ENCODE measurements at regions of chr1 and their contacts with region 1.

Region 1: GRCh38 chr1:201538612-201539551 is at the start of gene NAV1:
- DNase-seq: peak; percentile 72
- ATAC-seq: peak; percentile 51
- total RNA-seq, gene NAV1: 69.0 TPM

Region 2: DNA sequence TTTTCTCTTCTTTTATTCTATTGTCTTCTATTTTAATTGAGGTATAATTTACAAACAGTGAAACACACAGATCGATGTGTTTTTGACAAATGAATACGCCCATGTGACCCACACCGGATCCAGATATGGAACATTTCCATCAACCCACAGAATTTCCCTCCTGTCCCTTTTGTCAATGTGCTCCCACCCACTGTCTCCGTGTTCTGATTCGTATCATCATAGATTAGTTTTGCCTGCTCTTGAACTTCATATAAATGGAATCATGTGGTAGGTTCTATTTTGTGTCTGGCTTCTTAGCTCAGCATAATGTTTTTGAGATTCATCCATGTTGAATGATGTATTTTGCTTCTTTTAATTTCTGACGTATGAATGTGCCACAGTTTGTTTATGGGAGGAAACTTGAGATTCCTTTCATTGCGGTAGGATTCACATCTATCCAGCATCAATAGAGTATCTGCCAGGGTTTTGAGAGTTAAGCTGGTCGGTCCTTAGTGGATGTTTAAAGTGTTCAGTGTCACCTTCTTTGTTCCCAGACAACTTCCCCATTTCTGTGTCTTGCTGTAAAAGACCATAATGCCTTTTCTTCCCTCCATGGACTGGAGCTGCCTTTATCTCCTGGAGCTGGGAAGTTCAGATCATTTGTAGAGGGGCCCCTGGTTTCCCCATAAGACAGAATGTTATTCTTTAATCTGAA is 14.8 kb after region 1 on chr1:
- intact Hi-C with region 1: loop called (anchors 2 kb)
- DNase-seq: no peak
- ATAC-seq: no peak

Measured in Right ventricle myocardium inferior (tissue), 1 donor.